Tibial artery (tissue), 4 donors: ENCODE measurements at regions of chr12 and their contacts with region 1.

Region 1: GRCh38 chr12:49200919-49201594 is 12.2 kb upstream of the TUBA1A start:
- DNase-seq: no peak
- H3K4me3 ChIP-seq: peak overlapping the region in 1 of 2 donors; percentile 21
- H3K27ac ChIP-seq: peak overlapping the region; percentile 65 to 70
- H3K4me1 ChIP-seq: peaks cover 0 to 20% (median 15%) of the 10 kb centered on the region in 4 donors
- H3K27me3 ChIP-seq: no peaks in the 10 kb centered on the region
- CTCF ChIP-seq: no peak

Region 2: DNA sequence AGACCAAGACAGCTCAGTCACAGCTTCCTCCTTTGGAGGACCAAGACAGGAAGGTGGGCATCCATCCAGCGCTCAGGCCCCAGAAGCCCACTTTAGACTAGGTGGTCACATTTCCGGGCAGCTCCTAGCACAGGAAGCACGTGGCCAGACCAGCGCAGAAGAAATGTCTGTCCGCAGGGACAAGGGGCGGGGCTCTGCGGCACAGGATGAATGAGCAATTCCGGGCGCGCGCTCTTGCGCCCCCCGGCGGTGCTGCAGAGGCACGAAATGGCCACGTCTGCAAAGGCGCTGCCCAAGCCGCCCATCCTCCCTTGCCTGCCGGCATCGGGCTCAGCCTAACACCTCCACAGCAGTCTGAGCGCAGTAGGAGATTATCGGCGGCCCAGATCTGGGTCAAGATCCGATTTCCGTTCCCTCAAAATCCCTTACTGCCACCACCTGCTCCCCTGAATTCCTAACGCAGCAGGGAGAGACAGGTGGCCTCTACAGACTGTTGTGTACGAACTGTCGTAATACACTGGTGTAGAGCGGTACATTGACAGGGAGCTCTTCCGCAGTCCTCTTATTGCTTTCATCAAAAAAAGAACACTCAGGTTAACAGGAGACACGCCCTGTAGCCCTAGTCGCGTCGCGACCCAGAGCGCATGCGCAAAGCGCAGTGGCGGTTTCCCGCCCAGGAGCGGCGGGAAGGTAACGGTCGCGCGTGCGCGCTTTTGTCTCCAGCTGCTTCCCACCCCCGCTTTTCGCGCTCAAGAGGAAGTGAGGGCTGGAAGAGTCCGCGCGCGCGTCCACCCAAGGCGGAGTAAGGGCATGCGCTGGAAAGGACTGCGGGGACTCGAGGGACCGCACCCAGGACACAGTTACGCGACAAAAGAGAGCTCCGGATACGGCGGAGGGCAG is 70.7 kb before region 1 on chr12:
- intact Hi-C with region 1: loop called (anchors 5 kb)
- DNase-seq: peak; percentile 94 to 97
- H3K4me3 ChIP-seq: peak overlapping the region; percentile 75 to 100
- H3K27ac ChIP-seq: peak overlapping the region; percentile 97 to 100
- H3K4me1 ChIP-seq: peaks cover 0 to 37% (median 20%) of the 10 kb centered on the region in 4 donors
- H3K27me3 ChIP-seq: no peaks in the 10 kb centered on the region
- CTCF ChIP-seq: peak; percentile 90 to 92